Natural killer cell (primary cell): ENCODE measurements at regions of chr9 and their contacts with region 1.

Region 1: GRCh38 chr9:29211580-29212396 is 1638.5 kb upstream of the C9orf72 start:
- DNase-seq: peak; percentile 38 to 72
- ATAC-seq: peak; percentile 90 to 92 (median 90)
- H3K4me3 ChIP-seq: peak overlapping the region; percentile 48
- H3K4me3 Mint-ChIP-seq: peak overlapping the region; percentile 89
- H3K27ac ChIP-seq: no peak overlapping the region
- H3K27ac Mint-ChIP-seq: peak overlapping the region; percentile 39 to 90
- H3K4me1 ChIP-seq: peaks cover 28% of the 10 kb centered on the region
- H3K4me1 Mint-ChIP-seq: peaks cover 16 to 44% of the 10 kb centered on the region in 2 donors
- H3K27me3 ChIP-seq: peaks cover 9% of the 10 kb centered on the region
- H3K27me3 Mint-ChIP-seq: peaks cover 6 to 20% of the 10 kb centered on the region in 2 donors
- CTCF ChIP-seq: peak; percentile 73

Region 2: GRCh38 chr9:28774416-28775235 is 437.2 kb before region 1 on chr9:
- intact Hi-C with region 1: loop called (anchors 10 kb)
- DNase-seq: no peak
- ATAC-seq: peak in 1 of 3 donors; percentile 26
- H3K4me3 ChIP-seq: no peak overlapping the region
- H3K4me3 Mint-ChIP-seq: no peak overlapping the region
- H3K27ac ChIP-seq: no peak overlapping the region
- H3K27ac Mint-ChIP-seq: no peak overlapping the region
- H3K4me1 ChIP-seq: no peaks in the 10 kb centered on the region
- H3K4me1 Mint-ChIP-seq: peaks cover 0 to 13% of the 10 kb centered on the region in 2 donors
- H3K27me3 ChIP-seq: no peaks in the 10 kb centered on the region
- H3K27me3 Mint-ChIP-seq: no peaks in the 10 kb centered on the region
- CTCF ChIP-seq: peak; percentile 64

Region 3: GRCh38 chr9:28866951-28867350 is 344.8 kb before region 1 on chr9:
- intact Hi-C with region 1: loop called (anchors 10 kb)
- DNase-seq: no peak
- ATAC-seq: no peak
- H3K4me3 ChIP-seq: no peak overlapping the region
- H3K4me3 Mint-ChIP-seq: no peak overlapping the region
- H3K27ac ChIP-seq: no peak overlapping the region
- H3K27ac Mint-ChIP-seq: peak overlapping the region in 1 of 2 donors; percentile 41
- H3K4me1 ChIP-seq: no peaks in the 10 kb centered on the region
- H3K4me1 Mint-ChIP-seq: peaks cover 6 to 35% of the 10 kb centered on the region in 2 donors
- H3K27me3 ChIP-seq: no peaks in the 10 kb centered on the region
- H3K27me3 Mint-ChIP-seq: no peaks in the 10 kb centered on the region
- CTCF ChIP-seq: no peak

Region 4: GRCh38 chr9:29439961-29440360 is 228.2 kb after region 1 on chr9:
- intact Hi-C with region 1: loop called (anchors 5 kb)
- DNase-seq: no peak
- ATAC-seq: no peak
- H3K4me3 ChIP-seq: no peak overlapping the region
- H3K4me3 Mint-ChIP-seq: no peak overlapping the region
- H3K27ac ChIP-seq: no peak overlapping the region
- H3K27ac Mint-ChIP-seq: no peak overlapping the region
- H3K4me1 ChIP-seq: no peaks in the 10 kb centered on the region
- H3K4me1 Mint-ChIP-seq: peaks cover 0 to 15% of the 10 kb centered on the region in 2 donors
- H3K27me3 ChIP-seq: no peaks in the 10 kb centered on the region
- H3K27me3 Mint-ChIP-seq: no peaks in the 10 kb centered on the region
- CTCF ChIP-seq: no peak

Region 5: GRCh38 chr9:29514336-29514735 is 302.5 kb after region 1 on chr9:
- intact Hi-C with region 1: no loop called
- DNase-seq: no peak
- ATAC-seq: no peak
- H3K4me3 ChIP-seq: no peak overlapping the region
- H3K4me3 Mint-ChIP-seq: no peak overlapping the region
- H3K27ac ChIP-seq: no peak overlapping the region
- H3K27ac Mint-ChIP-seq: no peak overlapping the region
- H3K4me1 ChIP-seq: no peaks in the 10 kb centered on the region
- H3K4me1 Mint-ChIP-seq: no peaks in the 10 kb centered on the region
- H3K27me3 ChIP-seq: no peaks in the 10 kb centered on the region
- H3K27me3 Mint-ChIP-seq: no peaks in the 10 kb centered on the region
- CTCF ChIP-seq: no peak

Region 6: DNA sequence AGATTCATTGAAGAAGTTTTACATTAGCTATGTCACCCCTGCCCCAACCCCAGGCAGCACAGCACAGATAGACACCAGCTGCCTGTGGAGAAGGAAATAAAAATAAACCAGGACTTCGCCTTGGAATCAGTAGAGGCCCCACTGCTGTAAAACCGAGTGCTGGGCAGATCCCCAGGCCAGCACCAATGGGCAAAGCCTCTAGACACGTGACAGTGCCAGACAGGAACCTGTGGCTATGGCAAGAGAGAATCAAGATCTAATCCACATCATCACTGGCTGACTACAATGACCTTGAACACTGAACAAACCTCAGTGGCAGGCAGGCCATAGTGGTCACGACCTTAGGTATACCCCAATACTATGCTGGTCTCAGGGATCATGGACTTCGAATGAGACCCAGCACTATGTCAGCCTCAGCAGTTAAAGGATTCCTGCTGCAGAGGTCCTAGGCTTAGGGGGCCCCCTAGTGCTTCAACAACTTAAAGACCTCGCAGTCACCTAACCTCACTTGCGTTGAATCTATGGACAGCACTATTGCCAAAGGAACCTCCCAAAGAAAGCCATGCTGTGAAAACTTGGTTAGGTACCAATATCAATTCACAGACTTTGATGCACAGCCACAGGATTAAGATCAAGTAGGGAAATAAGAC is 480.1 kb after region 1 on chr9:
- intact Hi-C with region 1: loop called (anchors 1 kb)
- DNase-seq: no peak
- ATAC-seq: peak in 2 of 3 donors; percentile 39 to 67
- H3K4me3 ChIP-seq: no peak overlapping the region
- H3K4me3 Mint-ChIP-seq: no peak overlapping the region
- H3K27ac ChIP-seq: no peak overlapping the region
- H3K27ac Mint-ChIP-seq: no peak overlapping the region
- H3K4me1 ChIP-seq: no peaks in the 10 kb centered on the region
- H3K4me1 Mint-ChIP-seq: no peaks in the 10 kb centered on the region
- H3K27me3 ChIP-seq: no peaks in the 10 kb centered on the region
- H3K27me3 Mint-ChIP-seq: no peaks in the 10 kb centered on the region
- CTCF ChIP-seq: peak; percentile 37